ENCODE measurements at regions of chr3 and their contacts with region 1.

Region 1: GRCh38 chr3:121895121-121895520 is 920 bp downstream of the SLC15A2 start:
- DNase-seq: peak in 1 of 2 experiments; percentile 49
- H3K4me3 ChIP-seq: no peak overlapping the region
- H3K4me3 Mint-ChIP-seq: no peak overlapping the region
- H3K27ac Mint-ChIP-seq: no peak overlapping the region
- H3K4me1 ChIP-seq: peaks cover 58% of the 10 kb centered on the region
- H3K4me1 Mint-ChIP-seq: peaks cover 29% of the 10 kb centered on the region
- H3K27me3 ChIP-seq: no peaks in the 10 kb centered on the region
- H3K27me3 Mint-ChIP-seq: no peaks in the 10 kb centered on the region
- CTCF ChIP-seq: no peak

Region 2: DNA sequence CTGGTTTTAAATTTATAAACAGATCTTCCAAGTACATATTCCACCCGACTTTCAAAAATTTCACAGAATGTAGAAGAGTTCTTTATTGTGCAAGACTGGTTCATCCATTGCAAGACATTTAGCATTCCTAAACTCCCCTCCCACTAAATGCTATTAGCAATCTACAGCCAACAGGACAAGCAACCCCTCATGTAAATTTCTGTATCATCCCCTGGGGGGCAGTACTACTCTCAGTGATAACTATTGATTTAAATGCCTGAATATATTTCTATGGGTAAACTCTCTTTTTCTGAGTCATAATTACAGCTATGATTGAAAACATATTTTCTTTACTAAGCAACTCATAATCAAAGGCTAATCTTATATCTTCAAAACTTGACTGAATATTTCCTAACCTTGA is 11.6 kb before region 1 on chr3:
- CTCF ChIA-PET with region 1: no interaction called
- POLR2A ChIA-PET with region 1: no interaction called
- intact Hi-C with region 1: loop called (anchors 1 kb)
- DNase-seq: peak in 1 of 2 experiments; percentile 51
- H3K4me3 ChIP-seq: no peak overlapping the region
- H3K4me3 Mint-ChIP-seq: no peak overlapping the region
- H3K27ac Mint-ChIP-seq: no peak overlapping the region
- H3K4me1 ChIP-seq: peaks cover 11% of the 10 kb centered on the region
- H3K4me1 Mint-ChIP-seq: peaks cover 19% of the 10 kb centered on the region
- H3K27me3 ChIP-seq: no peaks in the 10 kb centered on the region
- H3K27me3 Mint-ChIP-seq: no peaks in the 10 kb centered on the region
- CTCF ChIP-seq: peak in 1 of 2 experiments; percentile 55

Region 3: GRCh38 chr3:121942116-121942788 is 47.1 kb after region 1 on chr3:
- CTCF ChIA-PET with region 1: no interaction called
- POLR2A ChIA-PET with region 1: interaction called, 4 read pairs
- intact Hi-C with region 1: loop called (anchors 5 kb)
- DNase-seq: no peak
- H3K4me3 ChIP-seq: no peak overlapping the region
- H3K4me3 Mint-ChIP-seq: no peak overlapping the region
- H3K27ac Mint-ChIP-seq: no peak overlapping the region
- H3K4me1 ChIP-seq: peaks cover 34% of the 10 kb centered on the region
- H3K4me1 Mint-ChIP-seq: no peaks in the 10 kb centered on the region
- H3K27me3 ChIP-seq: no peaks in the 10 kb centered on the region
- H3K27me3 Mint-ChIP-seq: no peaks in the 10 kb centered on the region
- CTCF ChIP-seq: no peak

Region 4: DNA sequence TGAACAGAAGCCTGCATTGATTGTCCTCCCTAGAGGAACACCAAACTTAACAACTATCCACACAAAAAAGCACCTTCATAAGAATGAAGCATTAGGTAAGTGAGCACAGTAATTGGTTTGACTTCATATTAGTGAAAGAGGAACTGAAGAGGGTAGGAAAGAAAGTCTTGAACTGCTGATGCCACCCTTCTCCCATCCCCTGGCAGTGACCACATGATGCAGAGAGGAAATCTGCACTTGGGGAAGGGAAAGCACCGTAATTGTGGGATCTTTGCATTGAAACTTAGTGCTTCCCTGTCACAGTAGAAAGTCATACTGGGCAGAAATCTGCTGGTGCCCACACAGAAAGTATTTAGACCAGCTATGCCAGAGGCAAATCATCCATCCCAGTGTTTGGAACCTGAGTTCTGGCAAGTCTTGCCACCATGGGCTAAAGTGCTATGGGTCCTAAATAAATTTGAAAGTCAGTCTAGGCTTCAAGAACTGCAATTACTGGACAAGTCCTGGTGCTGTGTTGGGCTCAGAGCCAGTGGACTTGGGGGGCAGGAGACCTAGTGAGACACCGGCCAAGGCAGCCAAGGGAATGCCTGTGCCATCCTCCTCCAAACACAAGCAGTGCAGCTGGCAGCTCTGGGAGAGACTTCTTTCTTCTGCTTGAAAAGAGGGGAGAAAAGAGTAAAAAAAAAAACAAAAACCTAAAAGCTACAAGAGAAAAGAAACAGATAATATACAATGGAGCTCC is 62.7 kb after region 1 on chr3:
- CTCF ChIA-PET with region 1: no interaction called
- POLR2A ChIA-PET with region 1: no interaction called
- intact Hi-C with region 1: no loop called
- DNase-seq: no peak
- H3K4me3 ChIP-seq: no peak overlapping the region
- H3K4me3 Mint-ChIP-seq: no peak overlapping the region
- H3K27ac Mint-ChIP-seq: no peak overlapping the region
- H3K4me1 ChIP-seq: no peaks in the 10 kb centered on the region
- H3K4me1 Mint-ChIP-seq: no peaks in the 10 kb centered on the region
- H3K27me3 ChIP-seq: no peaks in the 10 kb centered on the region
- H3K27me3 Mint-ChIP-seq: no peaks in the 10 kb centered on the region
- CTCF ChIP-seq: no peak